ENCODE measurements at regions of chr15 and their contacts with region 1.

Region 1: DNA sequence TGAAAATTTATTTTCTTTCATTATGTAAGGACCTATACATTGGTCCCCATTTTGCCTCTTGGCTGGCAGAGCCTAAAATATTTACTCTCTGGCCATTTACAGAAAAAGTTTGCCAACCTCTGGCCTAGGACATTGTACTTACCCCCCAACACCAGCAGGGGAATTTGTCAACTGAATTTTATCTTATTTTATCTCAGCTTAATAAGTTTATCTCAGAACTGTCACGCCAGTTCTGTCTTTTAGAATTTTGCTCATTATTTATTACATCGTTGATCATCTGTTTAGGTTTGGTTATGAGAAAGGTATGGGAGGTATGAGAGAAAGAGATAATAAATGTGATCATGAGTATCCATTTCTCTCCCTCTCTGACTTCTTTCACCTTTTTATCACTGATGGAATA is 38.3 kb downstream of the CHD2 start:
- DNase-seq: no peak
- ATAC-seq: no peak
- H3K4me3 Mint-ChIP-seq: no peak overlapping the region
- H3K27ac Mint-ChIP-seq: no peak overlapping the region
- H3K4me1 Mint-ChIP-seq: peaks cover 48% of the 10 kb centered on the region
- H3K27me3 Mint-ChIP-seq: no peaks in the 10 kb centered on the region

Region 2: DNA sequence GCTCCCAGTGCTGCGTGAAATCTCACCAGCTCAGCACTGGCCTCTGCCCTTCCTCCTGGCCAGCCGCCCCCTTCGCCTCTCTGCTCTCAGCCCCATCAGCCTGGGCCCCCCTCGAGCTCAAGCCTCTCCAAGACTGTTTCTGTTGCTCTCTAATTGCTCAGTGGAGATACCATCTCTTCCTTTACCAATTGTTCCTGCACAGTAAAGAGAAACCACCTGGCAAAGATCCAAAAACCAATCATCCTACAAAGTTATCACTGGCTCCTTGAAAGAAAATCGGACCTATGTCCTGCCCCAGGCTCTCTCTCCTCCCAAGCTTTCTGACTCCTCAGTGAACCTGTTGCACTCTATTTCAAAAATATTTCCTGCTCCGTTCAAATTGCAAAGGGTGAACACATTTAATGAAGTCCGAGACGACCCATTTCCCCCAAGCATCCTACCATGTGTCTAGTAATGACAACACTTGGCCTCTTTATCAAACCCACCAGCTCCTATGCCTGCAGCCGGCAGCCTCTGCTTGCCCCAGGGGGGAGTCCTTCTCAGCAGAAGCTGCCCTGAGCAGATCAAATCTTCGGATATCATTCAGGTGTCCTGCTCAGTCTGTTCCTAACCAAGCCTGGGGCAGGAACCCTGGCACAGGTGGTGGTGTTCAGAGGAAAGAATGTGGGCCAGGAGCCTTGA is 229.1 kb before region 1 on chr15:
- CTCF ChIA-PET with region 1: no interaction called
- POLR2A ChIA-PET with region 1: no interaction called
- intact Hi-C with region 1: no loop called
- DNase-seq: no peak
- ATAC-seq: no peak
- H3K4me3 Mint-ChIP-seq: no peak overlapping the region
- H3K27ac Mint-ChIP-seq: no peak overlapping the region
- H3K4me1 Mint-ChIP-seq: peaks cover 11% of the 10 kb centered on the region
- H3K27me3 Mint-ChIP-seq: peaks cover 6% of the 10 kb centered on the region

Region 3: GRCh38 chr15:92885224-92886041 is 53.0 kb before region 1 on chr15:
- CTCF ChIA-PET with region 1: no interaction called
- POLR2A ChIA-PET with region 1: no interaction called
- intact Hi-C with region 1: no loop called
- DNase-seq: no peak
- ATAC-seq: no peak
- H3K4me3 Mint-ChIP-seq: peak overlapping the region; percentile 92
- H3K27ac Mint-ChIP-seq: peak overlapping the region; percentile 99
- H3K4me1 Mint-ChIP-seq: peaks cover 47% of the 10 kb centered on the region
- H3K27me3 Mint-ChIP-seq: no peaks in the 10 kb centered on the region

Region 4: DNA sequence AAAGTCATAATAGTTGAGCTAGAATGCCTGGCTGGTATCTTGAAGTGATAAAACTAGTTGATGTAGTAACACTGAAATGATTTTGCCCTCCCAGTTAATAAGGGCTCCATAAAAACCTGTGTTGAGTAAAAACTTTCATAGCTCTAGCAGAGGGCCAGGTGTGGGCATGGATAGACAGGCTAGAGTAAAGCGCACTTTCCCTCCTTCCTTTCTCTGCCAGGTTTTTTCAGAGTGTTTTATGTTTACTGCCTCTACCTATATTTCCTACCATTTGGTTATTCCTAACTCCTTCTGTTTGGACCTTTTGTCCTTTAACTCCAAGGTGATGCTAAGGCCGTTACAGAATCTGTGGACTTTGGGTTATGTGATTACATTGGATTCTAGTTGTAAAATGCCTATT is 12.9 kb before region 1 on chr15:
- CTCF ChIA-PET with region 1: interaction called, 26 read pairs
- POLR2A ChIA-PET with region 1: interaction called, 5 read pairs
- intact Hi-C with region 1: no loop called
- DNase-seq: no peak
- ATAC-seq: no peak
- H3K4me3 Mint-ChIP-seq: no peak overlapping the region
- H3K27ac Mint-ChIP-seq: no peak overlapping the region
- H3K4me1 Mint-ChIP-seq: peaks cover 81% of the 10 kb centered on the region
- H3K27me3 Mint-ChIP-seq: no peaks in the 10 kb centered on the region

Region 5: DNA sequence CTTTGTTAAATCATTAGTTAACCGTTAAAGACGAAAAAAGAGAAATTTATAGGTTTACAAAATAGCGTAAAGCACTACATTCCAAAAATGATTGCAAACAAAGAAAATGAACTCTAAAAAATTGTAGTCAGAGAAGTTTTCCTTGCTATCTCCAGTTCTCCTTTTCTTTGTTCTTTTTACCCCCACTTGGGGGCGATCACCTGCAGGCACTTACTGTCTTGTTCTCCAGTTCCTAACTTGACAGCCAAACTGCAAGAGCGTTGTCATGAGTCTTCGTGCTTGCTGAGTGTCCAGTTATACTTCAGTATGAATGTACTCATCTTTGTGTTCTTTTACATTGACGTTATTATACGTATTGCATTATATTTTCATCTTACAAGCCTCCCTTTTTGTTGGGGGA is 16.2 kb after region 1 on chr15:
- CTCF ChIA-PET with region 1: interaction called, 19 read pairs
- POLR2A ChIA-PET with region 1: no interaction called
- intact Hi-C with region 1: loop called (anchors 2 kb)
- DNase-seq: peak; percentile 28
- ATAC-seq: no peak
- H3K4me3 Mint-ChIP-seq: no peak overlapping the region
- H3K27ac Mint-ChIP-seq: no peak overlapping the region
- H3K4me1 Mint-ChIP-seq: peaks cover 33% of the 10 kb centered on the region
- H3K27me3 Mint-ChIP-seq: no peaks in the 10 kb centered on the region

Region 6: DNA sequence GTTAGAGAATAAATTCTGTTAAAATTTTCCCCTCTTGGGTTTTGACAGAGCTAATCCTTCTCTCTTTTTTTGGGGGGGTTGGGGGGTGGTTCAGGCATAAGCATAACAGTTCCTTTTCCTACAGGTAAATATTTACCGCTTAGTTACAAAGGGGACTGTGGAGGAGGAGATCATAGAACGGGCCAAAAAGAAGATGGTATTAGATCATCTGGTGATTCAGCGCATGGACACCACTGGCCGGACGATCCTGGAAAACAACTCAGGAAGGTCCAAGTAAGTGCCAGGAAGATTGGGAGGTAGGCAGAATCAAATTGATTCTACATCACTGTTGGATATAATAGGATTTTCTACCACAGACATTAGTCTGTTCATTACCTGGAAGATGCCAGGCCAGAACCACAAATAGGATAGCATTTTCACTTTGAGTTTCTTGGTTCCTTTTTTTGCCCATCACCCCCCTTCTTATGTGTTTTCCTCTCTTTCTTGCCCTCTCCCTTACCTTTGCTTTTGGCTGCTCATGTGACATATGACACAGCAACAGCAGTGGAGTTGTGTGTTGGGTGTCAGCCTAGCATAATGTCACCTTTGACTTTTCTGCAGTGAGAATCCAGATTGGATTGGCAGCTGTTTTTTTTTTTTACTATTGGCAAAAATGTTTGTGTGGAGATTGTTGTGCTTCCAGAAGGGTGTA is 40.8 kb after region 1 on chr15:
- CTCF ChIA-PET with region 1: interaction called, 3 read pairs
- POLR2A ChIA-PET with region 1: no interaction called
- intact Hi-C with region 1: loop called in 1 of 2 experiments (anchors 5 kb)
- DNase-seq: no peak
- ATAC-seq: no peak
- H3K4me3 Mint-ChIP-seq: no peak overlapping the region
- H3K27ac Mint-ChIP-seq: peak overlapping the region; percentile 44
- H3K4me1 Mint-ChIP-seq: peaks cover 8% of the 10 kb centered on the region
- H3K27me3 Mint-ChIP-seq: no peaks in the 10 kb centered on the region

Region 7: GRCh38 chr15:93018580-93018979 is 80.2 kb after region 1 on chr15:
- CTCF ChIA-PET with region 1: interaction called, 3 read pairs
- POLR2A ChIA-PET with region 1: no interaction called
- intact Hi-C with region 1: loop called in 1 of 2 experiments (anchors 5 kb)
- DNase-seq: no peak
- ATAC-seq: no peak
- H3K4me3 Mint-ChIP-seq: no peak overlapping the region
- H3K27ac Mint-ChIP-seq: peak overlapping the region; percentile 80
- H3K4me1 Mint-ChIP-seq: peaks cover 71% of the 10 kb centered on the region
- H3K27me3 Mint-ChIP-seq: no peaks in the 10 kb centered on the region

Measured in activated CD4-positive, alpha-beta T cell treated with anti-CD3 and anti-CD28 coated beads for 36 hours (primary cell).